ENCODE measurements at regions of chr1 and their contacts with region 1.

Region 1: DNA sequence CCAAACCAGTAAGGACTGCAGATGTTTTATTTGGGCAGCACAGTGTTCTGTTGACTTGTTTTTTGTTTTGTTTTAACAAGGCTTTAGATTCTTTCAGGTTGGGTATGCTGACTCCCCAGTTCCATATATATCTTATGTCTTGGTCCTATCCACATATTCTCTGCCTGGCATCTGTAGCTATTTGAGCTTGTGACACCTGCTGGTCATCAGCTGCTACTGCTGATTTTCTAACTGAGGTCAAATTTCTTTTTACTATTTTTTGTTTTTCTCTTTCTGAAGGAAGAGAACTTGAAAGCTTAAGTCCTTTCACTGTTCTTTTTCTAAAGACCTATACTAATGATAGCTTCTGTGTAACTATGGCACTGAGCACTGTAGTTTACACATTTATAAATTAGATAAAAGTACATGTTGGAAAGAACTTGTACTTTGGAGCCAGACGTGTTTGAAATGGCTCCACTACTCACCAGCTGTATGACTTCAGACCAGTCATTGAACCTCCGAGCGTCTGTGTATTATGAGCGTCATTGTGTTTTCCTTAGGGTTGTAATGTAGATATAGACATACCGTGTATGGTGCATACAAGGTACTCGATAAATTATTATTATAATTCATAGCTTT is 109.4 kb downstream of the NRDC start:
- DNase-seq: peak; percentile 76
- H3K4me3 ChIP-seq: no peak overlapping the region
- H3K27ac ChIP-seq: no peak overlapping the region
- H3K4me1 ChIP-seq: no peaks in the 10 kb centered on the region
- H3K27me3 ChIP-seq: no peaks in the 10 kb centered on the region
- CTCF ChIP-seq: peak; percentile 92

Region 2: DNA sequence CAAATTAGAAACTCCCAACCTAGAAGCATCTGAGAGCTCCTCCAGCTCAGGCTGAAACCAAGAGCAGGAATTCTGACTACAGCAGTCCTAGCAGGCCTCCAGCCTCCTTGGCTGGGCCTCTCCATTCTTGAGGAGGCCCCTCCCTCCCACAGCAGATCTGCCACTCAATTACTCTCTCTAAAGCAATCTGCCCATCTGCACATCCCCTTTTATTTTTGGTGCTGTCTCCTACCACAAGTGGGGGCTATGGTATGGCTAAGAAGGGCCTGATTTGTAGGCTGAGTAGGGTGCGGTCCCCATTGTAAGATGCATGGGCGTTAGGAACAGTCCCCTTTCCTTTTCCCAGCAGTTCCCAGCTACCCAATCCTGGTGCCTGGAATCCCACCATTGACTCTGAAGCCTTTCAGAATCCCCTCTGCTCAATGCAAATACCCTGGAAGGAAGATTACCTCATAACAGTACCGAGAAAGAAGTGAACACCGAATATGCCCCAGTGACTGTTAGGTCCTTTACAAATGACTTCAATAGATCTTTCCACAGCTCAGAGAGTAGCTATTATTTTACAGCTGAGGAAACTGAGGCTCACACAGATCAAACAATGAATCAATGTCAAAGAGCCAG is 427.1 kb before region 1 on chr1:
- CTCF ChIA-PET with region 1: no interaction called
- POLR2A ChIA-PET with region 1: interaction called, 6 read pairs
- intact Hi-C with region 1: loop called (anchors 10 kb)
- DNase-seq: peak; percentile 72
- H3K4me3 ChIP-seq: no peak overlapping the region
- H3K27ac ChIP-seq: no peak overlapping the region
- H3K4me1 ChIP-seq: peaks cover 6% of the 10 kb centered on the region
- H3K27me3 ChIP-seq: no peaks in the 10 kb centered on the region
- CTCF ChIP-seq: peak; percentile 64

Region 3: GRCh38 chr1:51549016-51549619 is 220.0 kb before region 1 on chr1:
- CTCF ChIA-PET with region 1: no interaction called
- POLR2A ChIA-PET with region 1: no interaction called
- intact Hi-C with region 1: no loop called
- DNase-seq: no peak
- H3K4me3 ChIP-seq: no peak overlapping the region
- H3K27ac ChIP-seq: no peak overlapping the region
- H3K4me1 ChIP-seq: no peaks in the 10 kb centered on the region
- H3K27me3 ChIP-seq: no peaks in the 10 kb centered on the region
- CTCF ChIP-seq: no peak

Region 4: GRCh38 chr1:51616901-51617708 is 152.0 kb before region 1 on chr1 and contains the start of gene OSBPL9:
- CTCF ChIA-PET with region 1: interaction called, 10 read pairs
- POLR2A ChIA-PET with region 1: no interaction called
- intact Hi-C with region 1: no loop called
- DNase-seq: peak; percentile 95
- H3K4me3 ChIP-seq: peak within 1 kb of the TSS; percentile 85
- H3K27ac ChIP-seq: peak within 1 kb of the TSS; percentile 91
- H3K4me1 ChIP-seq: peaks cover 27% of the 10 kb centered on the region
- H3K27me3 ChIP-seq: no peaks in the 10 kb centered on the region
- CTCF ChIP-seq: no peak
- total RNA-seq, gene OSBPL9: 62.4 and 73.7 TPM in 2 replicates

Region 5: DNA sequence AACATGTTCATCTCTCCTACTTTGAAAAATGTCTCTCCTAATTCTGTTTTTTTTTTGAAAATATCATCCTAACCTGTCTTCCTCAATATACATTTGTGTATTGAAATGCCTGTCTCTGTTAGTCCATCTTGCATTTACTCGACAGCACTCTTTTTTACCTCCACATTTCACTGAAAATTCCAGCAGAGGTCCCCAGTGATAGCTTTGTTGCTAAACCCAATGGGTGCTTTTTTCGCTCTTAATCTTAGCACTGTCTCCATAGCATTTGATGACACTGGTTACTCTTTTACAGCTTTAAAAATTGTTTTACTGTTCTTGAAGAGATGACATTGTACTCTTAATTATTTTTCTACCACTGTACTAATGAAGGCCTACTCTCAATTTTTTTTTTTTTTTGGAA is 141.4 kb before region 1 on chr1:
- CTCF ChIA-PET with region 1: interaction called, 28 read pairs
- POLR2A ChIA-PET with region 1: no interaction called
- intact Hi-C with region 1: loop called (anchors 1 kb)
- DNase-seq: peak; percentile 79
- H3K4me3 ChIP-seq: no peak overlapping the region
- H3K27ac ChIP-seq: no peak overlapping the region
- H3K4me1 ChIP-seq: peaks cover 12% of the 10 kb centered on the region
- H3K27me3 ChIP-seq: no peaks in the 10 kb centered on the region
- CTCF ChIP-seq: peak; percentile 72

Region 6: DNA sequence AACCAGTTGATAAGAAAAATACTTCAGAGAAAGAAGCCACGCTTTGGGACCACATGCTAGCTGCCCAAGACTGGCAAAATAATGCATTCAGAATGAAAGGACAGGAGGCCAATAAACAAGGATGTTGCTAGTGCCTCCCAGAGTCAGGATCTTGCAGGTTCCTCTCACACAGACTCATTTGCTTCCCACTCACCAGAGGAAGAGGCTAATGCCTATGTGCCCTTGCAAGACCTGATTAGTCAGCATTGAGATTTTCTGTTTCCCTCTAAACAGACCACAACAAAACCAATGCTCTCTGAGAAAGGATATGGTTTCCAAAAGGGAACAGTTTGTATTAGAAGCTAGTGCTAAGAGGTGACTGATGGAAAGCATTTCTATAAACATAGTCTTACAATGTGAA is 23.8 kb after region 1 on chr1:
- CTCF ChIA-PET with region 1: no interaction called
- POLR2A ChIA-PET with region 1: no interaction called
- intact Hi-C with region 1: no loop called
- DNase-seq: no peak
- H3K4me3 ChIP-seq: no peak overlapping the region
- H3K27ac ChIP-seq: peak overlapping the region; percentile 47
- H3K4me1 ChIP-seq: no peaks in the 10 kb centered on the region
- H3K27me3 ChIP-seq: no peaks in the 10 kb centered on the region
- CTCF ChIP-seq: no peak